Naive thymus-derived CD8-positive, alpha-beta T cell (primary cell): ENCODE measurements at regions of chr19 and their contacts with region 1.

Region 1: DNA sequence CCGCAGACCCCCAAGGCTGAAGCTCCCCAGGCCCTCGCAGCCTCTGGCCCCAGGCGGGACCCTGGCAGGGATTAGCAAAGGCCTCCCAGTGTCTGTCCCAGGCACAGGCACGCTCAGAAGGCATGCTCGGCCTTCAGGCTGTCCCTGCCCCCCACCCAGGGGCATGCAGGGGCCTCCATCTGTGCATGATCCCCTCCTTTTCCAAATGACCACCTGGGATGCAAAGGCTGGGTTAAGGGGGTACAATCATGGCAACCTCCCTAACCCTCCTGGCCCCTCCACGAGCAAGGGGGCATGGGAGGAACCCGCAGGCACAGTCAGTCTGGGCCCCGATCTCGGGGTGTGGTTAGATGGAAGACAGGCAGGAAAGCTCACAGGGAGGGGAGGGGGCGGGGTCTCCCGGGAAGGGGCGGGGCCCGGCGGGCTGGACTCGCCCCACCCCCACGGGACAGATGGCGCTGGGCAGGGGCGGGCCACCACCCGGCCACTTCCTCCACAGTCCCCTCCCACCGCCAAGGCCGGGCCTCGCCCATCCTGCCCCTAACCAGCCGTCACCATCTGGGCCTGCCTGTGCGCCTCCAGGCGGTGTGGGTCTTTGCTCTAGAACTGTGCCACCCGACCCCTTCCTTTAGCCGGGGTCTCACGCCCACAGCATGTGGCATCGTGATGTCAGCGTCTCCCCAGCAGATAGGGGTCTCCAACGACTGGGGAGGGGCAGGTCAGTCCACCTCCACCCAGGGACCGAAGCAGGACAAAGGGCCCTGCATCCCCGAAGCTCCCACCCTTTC is 7.0 kb upstream of the REXO1 start:
- DNase-seq: peak; percentile 65 to 92 (median 70)
- ATAC-seq: peak; percentile 49 to 54
- H3K4me3 Mint-ChIP-seq: peak overlapping the region; percentile 78 to 98 (median 85)
- H3K27ac Mint-ChIP-seq: peak overlapping the region; percentile 84 to 98 (median 92)
- H3K4me1 Mint-ChIP-seq: peaks cover 24 to 70% (median 67%) of the 10 kb centered on the region in 4 donors
- H3K27me3 Mint-ChIP-seq: no peaks in the 10 kb centered on the region

Region 2: DNA sequence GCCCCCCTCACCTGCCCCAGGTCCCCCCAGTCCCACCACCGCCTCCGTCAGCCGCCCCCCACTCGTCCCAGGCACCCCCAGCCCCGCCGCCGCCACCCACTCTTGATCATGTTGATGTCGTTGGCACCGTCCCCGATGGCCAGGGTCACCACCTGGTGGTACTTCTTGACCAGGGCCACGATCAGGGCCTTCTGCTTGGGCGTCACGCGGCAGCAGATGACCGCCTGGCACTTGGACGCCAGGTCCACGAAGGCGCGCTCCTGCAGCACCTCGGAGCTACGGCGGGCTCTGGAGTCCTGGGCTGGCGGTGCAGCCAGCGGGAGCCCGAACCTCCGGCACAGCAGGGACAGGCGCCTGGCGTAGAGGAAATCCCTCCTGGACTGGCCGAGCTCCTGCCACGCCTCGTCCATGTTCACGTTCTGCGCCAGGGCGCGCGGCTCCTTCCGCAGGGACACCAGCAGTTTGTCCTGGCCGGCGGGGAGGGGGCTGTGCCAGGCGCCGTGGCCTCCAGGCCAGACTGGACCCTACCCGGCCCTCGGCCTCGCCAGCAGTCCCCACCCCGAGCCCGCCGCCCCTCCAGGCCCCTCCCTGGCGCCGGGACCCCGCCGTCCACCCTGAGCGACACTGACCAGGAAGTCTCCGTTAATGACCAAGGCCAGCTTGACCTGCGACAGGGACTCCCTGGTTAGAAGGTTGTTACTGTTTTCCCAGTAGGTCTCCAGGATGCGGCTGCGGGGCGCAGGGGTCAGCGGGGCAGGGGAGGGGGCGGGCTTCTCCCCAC is 65.8 kb before region 1 on chr19:
- POLR2A ChIA-PET with region 1: no interaction called
- DNase-seq: no peak
- ATAC-seq: no peak
- H3K4me3 Mint-ChIP-seq: no peak overlapping the region
- H3K27ac Mint-ChIP-seq: no peak overlapping the region
- H3K4me1 Mint-ChIP-seq: no peaks in the 10 kb centered on the region
- H3K27me3 Mint-ChIP-seq: peaks cover 1 to 40% (median 5%) of the 10 kb centered on the region in 5 donors

Region 3: GRCh38 chr19:1884719-1885334 is 29.6 kb after region 1 on chr19:
- POLR2A ChIA-PET with region 1: interaction called, 35 read pairs
- DNase-seq: peak in 1 of 10 donors; percentile 37
- ATAC-seq: peak in 1 of 2 donors; percentile 3
- H3K4me3 Mint-ChIP-seq: peak overlapping the region; percentile 93 to 100 (median 99)
- H3K27ac Mint-ChIP-seq: peak overlapping the region; percentile 96 to 100 (median 100)
- H3K4me1 Mint-ChIP-seq: peaks cover 22 to 41% (median 35%) of the 10 kb centered on the region in 4 donors
- H3K27me3 Mint-ChIP-seq: no peaks in the 10 kb centered on the region